BJ (cell line): ENCODE measurements at regions of chr2 and their contacts with region 1.

Region 1: GRCh38 chr2:177296040-177296439 is 31.5 kb upstream of the NFE2L2 start:
- DNase-seq: no peak
- H3K4me3 ChIP-seq: no peak overlapping the region
- H3K27me3 ChIP-seq: no peaks in the 10 kb centered on the region
- CTCF ChIP-seq: no peak

Region 2: DNA sequence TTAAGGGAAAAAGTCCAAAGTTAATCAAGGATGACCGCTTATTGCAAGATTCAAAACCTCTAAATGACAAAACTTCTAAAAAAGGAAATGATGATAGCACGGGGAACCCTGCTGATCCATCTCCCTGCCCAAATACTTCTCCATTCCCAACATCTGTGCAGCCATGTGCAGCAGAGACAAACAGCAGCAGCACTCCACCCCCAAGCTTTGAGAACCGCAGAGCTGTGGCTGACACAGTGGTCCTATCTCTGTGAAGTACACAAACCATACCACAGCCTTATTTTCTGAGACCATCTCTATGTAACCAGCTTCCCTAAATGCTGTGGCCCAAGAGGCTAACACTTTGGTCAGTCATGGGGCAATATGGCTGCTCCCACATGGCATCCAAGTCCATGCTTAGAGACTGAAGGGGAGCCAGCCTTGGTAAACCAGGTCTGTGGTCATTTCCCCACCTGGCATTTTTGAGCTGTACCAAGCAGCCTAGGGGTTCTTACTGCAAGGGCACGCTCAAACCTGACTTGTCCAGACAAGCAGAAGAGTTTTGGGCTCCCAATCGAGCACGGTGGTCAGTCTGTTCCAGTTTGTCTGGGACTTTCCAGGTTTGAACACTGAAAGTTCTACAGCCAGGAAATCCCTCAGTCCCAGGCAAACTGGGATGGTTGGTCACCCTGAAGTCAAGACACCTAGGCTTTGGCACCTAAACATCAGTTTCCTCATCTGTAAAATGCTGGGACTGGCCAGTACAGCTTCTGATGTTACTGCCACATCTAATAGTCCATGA is 14.4 kb before region 1 on chr2:
- CTCF ChIA-PET with region 1: interaction called, 14 read pairs
- POLR2A ChIA-PET with region 1: no interaction called
- DNase-seq: no peak
- H3K4me3 ChIP-seq: no peak overlapping the region
- H3K27me3 ChIP-seq: no peaks in the 10 kb centered on the region
- CTCF ChIP-seq: no peak

Region 3: GRCh38 chr2:177314194-177314593 is 18.2 kb after region 1 on chr2:
- CTCF ChIA-PET with region 1: interaction called, 11 read pairs
- POLR2A ChIA-PET with region 1: no interaction called
- DNase-seq: peak; percentile 51
- H3K4me3 ChIP-seq: no peak overlapping the region
- H3K27me3 ChIP-seq: no peaks in the 10 kb centered on the region
- CTCF ChIP-seq: no peak